HEK293 (cell line): ENCODE measurements at regions of chr12 and their contacts with region 1.

Region 1: GRCh38 chr12:6723607-6724396 is at the start of gene COPS7A:
- H3K4me3 ChIP-seq: peak within 1 kb of the TSS; percentile 58
- H3K27ac ChIP-seq: peak within 1 kb of the TSS; percentile 81
- H3K4me1 ChIP-seq: peaks cover 11% of the 10 kb centered on the region
- CTCF ChIP-seq: peak; percentile 63; the same call in 1 of the 2 replicates

Region 2: GRCh38 chr12:6735448-6736191 is 11.8 kb after region 1 on chr12:
- CTCF ChIA-PET with region 1: interaction called, 3 read pairs
- POLR2A ChIA-PET with region 1: interaction called, 16 read pairs
- H3K4me3 ChIP-seq: no peak overlapping the region
- H3K27ac ChIP-seq: no peak overlapping the region
- H3K4me1 ChIP-seq: no peaks in the 10 kb centered on the region
- CTCF ChIP-seq: peak; percentile 64; the same call in 1 of the 2 replicates

Region 3: DNA sequence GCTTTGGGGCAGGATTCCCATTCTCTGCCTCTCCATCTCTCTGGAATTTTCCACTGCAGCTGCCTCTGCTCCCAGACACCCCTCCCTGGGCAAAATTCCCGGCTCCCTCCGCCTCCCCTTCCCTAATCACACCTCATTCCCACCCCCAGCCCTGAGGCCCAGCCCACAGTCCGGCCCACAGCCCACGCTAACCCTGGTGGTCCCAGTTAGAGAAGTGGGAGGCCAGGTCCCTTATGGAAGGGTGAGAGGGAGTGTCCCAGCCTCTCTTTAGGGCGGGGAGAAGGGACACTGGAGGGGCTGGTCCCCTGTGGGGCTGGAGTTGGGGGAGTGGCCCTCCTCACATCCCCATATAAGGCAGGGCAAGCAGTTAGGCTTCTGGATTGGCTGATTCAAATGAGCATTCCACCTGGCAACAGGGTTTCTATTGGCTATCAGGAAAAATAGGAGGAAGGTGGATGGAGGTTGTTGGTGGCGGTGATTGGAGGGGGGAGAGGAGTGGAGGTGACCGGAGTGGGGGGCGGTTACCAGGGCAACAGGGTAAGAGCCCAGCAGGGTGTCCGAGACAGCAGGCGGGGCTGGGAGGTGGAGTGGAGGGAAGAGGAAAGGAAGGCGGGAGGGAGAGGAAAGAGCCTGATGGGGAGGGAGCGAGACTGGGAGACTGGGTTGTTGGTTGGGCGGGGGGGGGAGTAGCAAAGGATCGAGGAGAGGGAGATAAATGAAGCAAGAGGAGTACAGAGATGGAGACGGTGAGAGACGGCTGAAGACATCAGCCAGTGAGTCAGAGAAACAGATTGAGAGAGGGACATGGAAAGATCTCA is 40.4 kb after region 1 on chr12:
- CTCF ChIA-PET with region 1: interaction called, 4 read pairs
- POLR2A ChIA-PET with region 1: interaction called, 18 read pairs
- H3K4me3 ChIP-seq: no peak overlapping the region; the same call in 1 of the 2 replicates
- H3K27ac ChIP-seq: peak overlapping the region; percentile 92
- H3K4me1 ChIP-seq: peaks cover 30% of the 10 kb centered on the region
- CTCF ChIP-seq: no peak

Region 4: GRCh38 chr12:6796576-6796975 is 72.8 kb after region 1 on chr12:
- CTCF ChIA-PET with region 1: no interaction called
- POLR2A ChIA-PET with region 1: no interaction called
- H3K4me3 ChIP-seq: no peak overlapping the region
- H3K27ac ChIP-seq: no peak overlapping the region
- H3K4me1 ChIP-seq: no peaks in the 10 kb centered on the region
- CTCF ChIP-seq: no peak

Region 5: DNA sequence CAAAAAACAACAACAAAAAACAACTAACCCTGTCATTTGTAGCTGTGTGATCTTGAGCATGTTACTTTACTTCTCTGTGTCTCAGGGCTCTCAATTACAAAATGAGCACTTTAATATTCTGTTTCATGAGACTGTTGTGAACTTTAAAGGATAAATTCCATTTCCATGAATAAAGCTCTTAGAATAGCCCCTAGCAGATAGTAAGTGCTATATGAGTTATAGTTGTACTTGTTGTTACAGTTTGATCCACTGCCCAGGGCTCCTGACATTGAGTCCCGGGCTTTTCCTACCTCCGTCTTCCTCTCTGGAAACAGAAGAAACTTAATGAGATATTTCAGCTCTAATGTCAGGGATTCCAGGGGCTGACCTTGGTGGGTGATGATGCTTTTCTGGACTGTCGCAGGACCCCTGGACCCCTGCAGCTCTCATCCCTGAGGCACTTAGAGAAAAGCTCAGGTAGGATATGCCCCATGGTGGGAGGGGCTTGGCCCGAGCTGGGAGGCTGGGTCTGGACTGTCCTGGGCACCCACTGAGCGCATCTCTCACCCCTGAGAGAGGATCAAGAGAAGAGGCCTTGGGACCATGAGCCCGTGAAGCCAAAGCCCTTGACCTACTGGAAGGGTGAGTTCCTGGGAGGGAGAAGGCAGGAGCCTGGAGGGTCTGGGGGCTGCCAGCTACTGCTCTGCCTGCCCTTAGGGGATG is 109.5 kb after region 1 on chr12:
- CTCF ChIA-PET with region 1: interaction called, 3 read pairs
- POLR2A ChIA-PET with region 1: interaction called, 10 read pairs
- H3K4me3 ChIP-seq: no peak overlapping the region
- H3K27ac ChIP-seq: no peak overlapping the region
- H3K4me1 ChIP-seq: no peaks in the 10 kb centered on the region
- CTCF ChIP-seq: no peak

Region 6: DNA sequence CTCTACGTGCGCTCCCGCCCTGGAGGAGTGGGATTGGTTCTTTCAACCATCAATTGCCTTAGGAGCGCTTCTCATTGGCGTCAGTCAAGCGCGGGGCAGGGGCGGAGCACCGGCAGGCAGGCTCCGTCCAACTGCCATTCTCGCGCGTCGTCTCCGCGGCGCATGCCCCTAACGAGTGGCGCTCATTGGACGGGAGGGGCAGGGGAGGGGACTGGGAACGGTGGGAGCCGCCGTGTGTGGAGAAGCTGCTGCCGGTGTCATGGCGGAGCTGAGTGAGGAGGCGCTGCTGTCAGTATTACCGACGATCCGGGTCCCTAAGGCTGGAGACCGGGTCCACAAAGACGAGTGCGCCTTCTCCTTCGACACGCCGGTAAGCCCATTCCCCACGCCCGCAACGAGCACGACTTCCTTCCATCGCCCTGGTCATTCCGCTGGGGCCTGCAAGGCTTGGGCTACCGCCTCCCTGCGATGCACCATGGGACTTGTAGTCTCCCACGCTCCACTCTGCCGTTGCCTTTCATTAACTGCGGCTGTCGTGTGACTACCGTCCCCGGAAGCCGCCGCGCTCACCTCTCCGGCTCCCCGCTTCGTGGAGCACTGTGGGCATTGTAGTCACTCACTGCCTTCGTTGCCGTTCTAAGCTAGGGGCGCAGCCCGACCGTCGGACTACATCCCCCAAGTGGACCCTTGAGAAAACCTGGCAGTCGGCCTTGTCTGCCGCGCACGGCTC is 128.3 kb after region 1 on chr12 and contains the start of gene USP5:
- CTCF ChIA-PET with region 1: no interaction called
- POLR2A ChIA-PET with region 1: interaction called, 19 read pairs
- H3K4me3 ChIP-seq: peak within 1 kb of the TSS; percentile 76
- H3K27ac ChIP-seq: peak within 1 kb of the TSS; percentile 58
- H3K4me1 ChIP-seq: peaks cover 11% of the 10 kb centered on the region
- CTCF ChIP-seq: peak; percentile 70

Region 7: GRCh38 chr12:6925540-6926279 is 201.9 kb after region 1 on chr12:
- CTCF ChIA-PET with region 1: no interaction called
- POLR2A ChIA-PET with region 1: no interaction called
- H3K4me3 ChIP-seq: peak overlapping the region; percentile 9
- H3K27ac ChIP-seq: peak overlapping the region; percentile 80
- H3K4me1 ChIP-seq: peaks cover 28% of the 10 kb centered on the region
- CTCF ChIP-seq: 0 out of 2 replicates have a peak, but pooled peaks have one; percentile 50